ENCODE measurements at regions of chr2 and their contacts with region 1.

Region 1: DNA sequence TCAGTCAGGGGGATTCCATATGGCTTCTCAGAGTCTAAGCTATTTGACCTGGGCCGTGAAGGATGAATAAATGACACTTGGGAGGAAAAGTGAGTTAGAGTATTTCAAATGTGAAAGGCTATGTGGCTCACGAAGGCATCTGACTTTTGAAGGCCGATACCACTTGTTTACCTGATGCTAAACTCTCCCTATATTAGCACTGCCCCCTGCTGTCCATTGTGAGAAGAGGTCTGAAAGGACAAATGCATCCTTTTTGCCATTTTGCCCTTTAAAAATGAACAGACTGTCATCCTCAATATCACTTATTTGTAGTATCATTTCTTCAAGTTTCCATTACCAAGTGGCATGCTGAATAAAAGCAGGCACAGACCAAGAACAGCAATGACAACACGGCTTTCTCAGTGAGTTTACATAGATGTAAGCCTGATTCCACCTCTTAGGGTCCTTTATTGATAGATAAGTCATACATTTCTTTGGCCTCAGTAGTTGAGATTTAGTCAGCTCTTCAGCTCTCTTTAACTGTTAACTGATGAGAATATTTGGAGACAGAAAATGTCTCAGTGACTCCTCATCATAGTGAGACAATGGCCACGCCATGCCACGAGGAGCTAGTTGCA is 40.1 kb downstream of the DOCK10 start:
- DNase-seq: peak; percentile 23 to 88 (median 62)
- ATAC-seq: peak; percentile 64 to 79 (median 68)
- H3K4me3 ChIP-seq: no peak overlapping the region
- H3K4me3 Mint-ChIP-seq: peak overlapping the region in 2 of 3 donors; percentile 25 to 34
- H3K27ac ChIP-seq: peak overlapping the region; percentile 38
- H3K27ac Mint-ChIP-seq: peak overlapping the region; percentile 84 to 88
- H3K4me1 ChIP-seq: peaks cover 16 to 42% of the 10 kb centered on the region in 2 experiments
- H3K4me1 Mint-ChIP-seq: peaks cover 82 to 87% (median 86%) of the 10 kb centered on the region in 3 donors
- H3K27me3 ChIP-seq: no peaks in the 10 kb centered on the region
- H3K27me3 Mint-ChIP-seq: no peaks in the 10 kb centered on the region

Region 2: DNA sequence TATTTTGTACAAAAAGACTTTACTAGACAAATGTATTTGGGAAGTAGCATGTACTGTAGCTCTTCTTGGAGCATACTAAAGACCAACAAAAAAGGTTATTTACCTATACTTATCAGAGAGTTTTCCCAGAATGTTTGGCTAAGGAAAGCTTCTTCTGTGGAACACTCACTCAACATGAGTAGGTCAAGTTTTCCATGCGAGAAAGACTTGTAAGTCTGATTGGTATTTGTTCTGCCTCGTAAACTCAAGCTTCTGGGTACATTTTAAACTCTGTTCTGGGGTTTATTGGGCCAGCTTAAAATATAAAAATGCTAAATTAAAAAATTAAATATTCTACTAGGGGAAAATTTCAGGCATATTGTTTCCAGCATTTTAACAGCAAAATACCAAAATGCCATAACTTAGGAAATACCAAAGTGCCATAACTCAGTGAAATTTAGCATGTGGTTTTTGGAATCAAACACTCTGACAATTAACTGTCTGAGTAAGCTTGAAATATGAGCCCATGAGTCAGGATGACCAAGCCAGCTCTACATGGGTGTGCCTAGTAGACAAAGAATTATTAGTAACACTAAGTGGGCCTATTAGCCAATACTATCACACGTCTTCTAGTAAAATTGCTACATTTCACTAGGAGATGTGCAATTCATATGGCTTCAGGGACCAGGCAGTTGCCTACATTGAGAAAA is 915.8 kb before region 1 on chr2:
- CTCF ChIA-PET with region 1: no interaction called
- POLR2A ChIA-PET with region 1: no interaction called
- DNase-seq: no peak
- ATAC-seq: no peak
- H3K4me3 ChIP-seq: no peak overlapping the region
- H3K4me3 Mint-ChIP-seq: no peak overlapping the region
- H3K27ac ChIP-seq: no peak overlapping the region
- H3K27ac Mint-ChIP-seq: no peak overlapping the region
- H3K4me1 ChIP-seq: no peaks in the 10 kb centered on the region
- H3K4me1 Mint-ChIP-seq: no peaks in the 10 kb centered on the region
- H3K27me3 ChIP-seq: no peaks in the 10 kb centered on the region
- H3K27me3 Mint-ChIP-seq: no peaks in the 10 kb centered on the region

Region 3: GRCh38 chr2:224927646-224928173 is 74.4 kb before region 1 on chr2:
- CTCF ChIA-PET with region 1: interaction called, 16 read pairs
- POLR2A ChIA-PET with region 1: no interaction called
- DNase-seq: peak in 34 of 35 experiments; percentile 45 to 87 (median 72)
- ATAC-seq: peak; percentile 67 to 88 (median 74)
- H3K4me3 ChIP-seq: no peak overlapping the region
- H3K4me3 Mint-ChIP-seq: peak overlapping the region; percentile 23 to 61 (median 60)
- H3K27ac ChIP-seq: peak overlapping the region; percentile 91
- H3K27ac Mint-ChIP-seq: peak overlapping the region; percentile 90 to 94
- H3K4me1 ChIP-seq: peaks cover 66 to 75% of the 10 kb centered on the region in 2 experiments
- H3K4me1 Mint-ChIP-seq: peaks cover 99% of the 10 kb centered on the region in 3 donors
- H3K27me3 ChIP-seq: no peaks in the 10 kb centered on the region
- H3K27me3 Mint-ChIP-seq: no peaks in the 10 kb centered on the region

Region 4: DNA sequence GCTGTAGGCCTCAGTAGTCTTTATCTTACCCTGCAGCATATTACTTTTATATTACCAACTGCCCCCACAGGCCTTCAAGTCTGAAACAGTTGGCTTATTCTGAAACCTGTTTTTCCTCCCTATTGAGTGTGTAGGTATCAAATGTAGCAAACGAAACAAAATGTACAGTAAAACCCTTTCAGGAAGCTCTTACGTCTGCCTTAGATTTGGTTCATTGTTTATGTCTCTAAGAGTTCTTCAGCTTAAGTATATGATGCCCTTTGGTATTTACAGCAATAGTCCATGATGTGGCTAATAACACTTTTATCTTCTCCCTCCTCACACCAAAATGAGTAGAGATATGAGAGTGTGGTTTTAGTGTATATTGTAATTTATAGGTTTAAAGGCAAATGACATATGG is 68.7 kb before region 1 on chr2:
- CTCF ChIA-PET with region 1: interaction called, 16 read pairs
- POLR2A ChIA-PET with region 1: interaction called in 1 of 2 experiments, 3 read pairs
- DNase-seq: no peak
- ATAC-seq: peak in 1 of 4 experiments; percentile 50
- H3K4me3 ChIP-seq: no peak overlapping the region
- H3K4me3 Mint-ChIP-seq: peak overlapping the region in 2 of 3 donors; percentile 22 to 30
- H3K27ac ChIP-seq: peak overlapping the region; percentile 18
- H3K27ac Mint-ChIP-seq: peak overlapping the region; percentile 86 to 90
- H3K4me1 ChIP-seq: peaks cover 45 to 80% of the 10 kb centered on the region in 2 experiments
- H3K4me1 Mint-ChIP-seq: peaks cover 94 to 96% (median 94%) of the 10 kb centered on the region in 3 donors
- H3K27me3 ChIP-seq: no peaks in the 10 kb centered on the region
- H3K27me3 Mint-ChIP-seq: no peaks in the 10 kb centered on the region

Region 5: DNA sequence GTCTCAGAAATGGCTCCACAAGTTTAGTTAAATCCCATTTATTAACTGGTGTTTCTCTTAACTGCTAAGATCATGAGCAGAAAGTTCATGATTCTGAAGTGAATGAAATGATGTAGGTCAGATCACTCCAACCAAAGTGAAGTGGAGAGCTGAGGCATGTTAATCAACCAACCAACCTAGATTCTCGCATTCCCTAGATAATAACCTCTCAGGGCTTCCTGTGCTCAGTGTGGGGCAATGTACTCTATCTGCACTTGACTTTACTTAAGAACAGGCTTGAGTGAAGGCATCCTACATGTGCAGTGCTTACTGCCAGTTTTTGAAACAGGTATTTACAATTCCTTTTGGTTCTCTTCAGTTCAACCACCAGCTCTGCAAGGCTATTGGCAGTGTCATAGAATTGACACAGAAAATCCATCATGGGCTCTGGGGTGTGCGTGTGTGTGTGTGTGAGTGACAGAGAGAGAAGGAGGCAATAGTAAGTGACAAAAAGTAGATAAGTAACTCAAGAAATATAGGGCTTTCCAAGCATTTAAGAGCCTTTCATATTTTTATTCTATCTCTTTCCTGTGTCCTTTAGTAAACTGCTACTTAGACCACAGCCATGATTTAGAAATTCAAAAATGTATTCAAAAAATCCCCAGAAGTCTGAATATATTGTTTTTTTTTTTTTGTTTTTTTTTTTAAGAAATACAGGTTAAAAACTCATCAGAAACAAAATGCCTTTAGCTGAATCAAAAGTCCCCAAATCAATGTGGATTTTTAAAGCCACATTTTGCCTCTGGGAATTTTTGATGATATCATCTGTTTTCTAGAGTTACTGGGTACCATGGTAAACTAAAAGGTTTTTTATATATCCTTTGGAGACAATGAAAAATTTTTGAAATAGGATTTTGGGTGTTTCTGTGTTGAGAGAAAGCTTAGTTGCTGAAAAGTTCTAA is 11.5 kb after region 1 on chr2:
- CTCF ChIA-PET with region 1: interaction called, 4 to 18 read pairs
- POLR2A ChIA-PET with region 1: no interaction called
- DNase-seq: peak in 1 of 35 experiments; percentile 28
- ATAC-seq: peak in 3 of 4 experiments; percentile 43 to 53 (median 50)
- H3K4me3 ChIP-seq: no peak overlapping the region
- H3K4me3 Mint-ChIP-seq: peak overlapping the region in 1 of 3 donors; percentile 3
- H3K27ac ChIP-seq: no peak overlapping the region
- H3K27ac Mint-ChIP-seq: peak overlapping the region; percentile 53 to 80
- H3K4me1 ChIP-seq: peaks cover 4 to 13% of the 10 kb centered on the region in 2 experiments
- H3K4me1 Mint-ChIP-seq: peaks cover 78 to 82% (median 80%) of the 10 kb centered on the region in 3 donors
- H3K27me3 ChIP-seq: no peaks in the 10 kb centered on the region
- H3K27me3 Mint-ChIP-seq: no peaks in the 10 kb centered on the region